Activated CD8-positive, alpha-beta T cell treated with anti-CD3 and anti-CD28 coated beads for 36 hours (primary cell): ENCODE measurements at regions of chr7 and their contacts with region 1.

Region 1: DNA sequence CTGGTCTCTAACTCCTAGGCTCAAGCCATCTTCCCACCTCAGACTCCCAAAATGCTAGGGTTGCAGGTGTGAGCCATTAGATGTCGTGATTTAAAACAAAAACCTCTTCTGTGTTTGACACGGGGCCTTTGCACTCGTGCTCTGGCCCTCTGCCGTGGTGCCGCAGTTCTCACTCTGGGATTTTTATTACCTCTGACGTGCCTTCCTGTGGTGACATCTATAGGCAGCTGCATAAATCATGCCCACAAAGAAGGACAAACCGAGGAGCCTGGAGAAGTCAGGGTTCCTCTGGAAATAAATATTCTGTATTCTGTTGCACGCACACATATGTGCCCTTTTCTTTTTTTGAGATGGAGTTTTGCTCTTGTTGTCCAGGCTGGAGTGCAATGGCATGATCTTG is 25.9 kb upstream of the OCM start:
- DNase-seq: no peak
- ATAC-seq: no peak
- H3K4me3 Mint-ChIP-seq: no peak overlapping the region
- H3K27ac Mint-ChIP-seq: no peak overlapping the region
- H3K4me1 Mint-ChIP-seq: peaks cover 11% of the 10 kb centered on the region
- H3K27me3 Mint-ChIP-seq: no peaks in the 10 kb centered on the region
- CTCF ChIP-seq: no peak

Region 2: DNA sequence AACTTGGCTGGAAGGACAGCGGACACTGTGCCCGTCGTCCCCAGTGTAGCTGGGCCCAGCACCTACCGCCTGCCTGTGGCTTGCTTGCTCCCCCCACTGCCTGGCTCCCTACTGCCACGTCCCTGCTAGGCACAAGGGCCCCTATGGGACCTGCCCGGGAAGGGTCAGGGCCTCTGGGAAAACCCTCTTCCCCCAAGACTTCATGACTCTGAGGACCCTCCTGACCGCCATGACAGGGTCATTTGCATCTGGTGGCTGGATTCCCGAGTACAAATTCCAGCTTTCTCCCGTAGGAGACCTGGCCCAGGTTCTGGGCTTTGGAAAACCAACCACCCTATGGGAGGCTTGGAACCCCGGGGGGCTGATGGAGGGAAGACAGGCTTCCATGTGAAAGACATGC is 894.4 kb before region 1 on chr7:
- CTCF ChIA-PET with region 1: no interaction called
- POLR2A ChIA-PET with region 1: no interaction called
- intact Hi-C with region 1: no loop called
- DNase-seq: no peak
- ATAC-seq: no peak
- H3K4me3 Mint-ChIP-seq: no peak overlapping the region
- H3K27ac Mint-ChIP-seq: no peak overlapping the region
- H3K4me1 Mint-ChIP-seq: peaks cover 5% of the 10 kb centered on the region
- H3K27me3 Mint-ChIP-seq: peaks cover 18% of the 10 kb centered on the region
- CTCF ChIP-seq: no peak

Region 3: DNA sequence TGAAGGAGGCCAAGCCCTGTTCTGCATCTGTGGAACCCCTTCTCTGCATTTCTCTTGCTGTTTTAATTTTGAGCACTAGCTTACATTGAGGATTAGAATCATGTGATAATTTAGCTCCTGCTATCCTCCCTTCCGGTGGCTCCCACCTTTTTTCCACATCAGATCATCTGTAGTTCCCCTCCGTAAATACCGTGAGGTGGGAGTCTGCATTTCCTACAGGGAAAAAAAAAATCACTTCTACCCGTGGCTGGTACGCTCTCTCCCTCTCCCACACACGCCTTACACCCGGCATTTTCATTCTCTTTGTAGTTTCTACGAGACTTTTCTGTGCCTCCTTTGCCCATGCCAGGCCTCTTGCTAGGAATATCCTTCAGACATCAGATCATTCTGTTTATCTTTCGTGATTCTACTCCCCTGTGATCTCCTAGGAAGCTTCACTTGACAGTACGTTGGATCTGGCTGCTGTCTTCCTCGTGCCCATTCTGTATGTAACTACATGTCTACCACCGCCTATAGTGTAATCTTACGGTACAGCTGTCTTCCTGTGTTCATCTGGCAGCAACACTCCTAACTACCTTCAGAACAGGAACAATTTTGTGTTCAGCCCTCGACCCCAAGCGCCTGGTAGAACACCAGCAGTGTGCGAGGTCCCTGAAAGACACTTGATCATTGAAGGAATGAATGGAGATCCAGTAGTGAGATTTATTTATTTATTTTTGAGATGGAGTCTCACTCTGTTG is 15.8 kb before region 1 on chr7:
- CTCF ChIA-PET with region 1: interaction called, 11 read pairs
- POLR2A ChIA-PET with region 1: no interaction called
- intact Hi-C with region 1: no loop called
- DNase-seq: no peak
- ATAC-seq: no peak
- H3K4me3 Mint-ChIP-seq: no peak overlapping the region
- H3K27ac Mint-ChIP-seq: no peak overlapping the region
- H3K4me1 Mint-ChIP-seq: peaks cover 19% of the 10 kb centered on the region
- H3K27me3 Mint-ChIP-seq: no peaks in the 10 kb centered on the region
- CTCF ChIP-seq: no peak